BJ (cell line): ENCODE measurements at regions of chr12 and their contacts with region 1.

Region 1: DNA sequence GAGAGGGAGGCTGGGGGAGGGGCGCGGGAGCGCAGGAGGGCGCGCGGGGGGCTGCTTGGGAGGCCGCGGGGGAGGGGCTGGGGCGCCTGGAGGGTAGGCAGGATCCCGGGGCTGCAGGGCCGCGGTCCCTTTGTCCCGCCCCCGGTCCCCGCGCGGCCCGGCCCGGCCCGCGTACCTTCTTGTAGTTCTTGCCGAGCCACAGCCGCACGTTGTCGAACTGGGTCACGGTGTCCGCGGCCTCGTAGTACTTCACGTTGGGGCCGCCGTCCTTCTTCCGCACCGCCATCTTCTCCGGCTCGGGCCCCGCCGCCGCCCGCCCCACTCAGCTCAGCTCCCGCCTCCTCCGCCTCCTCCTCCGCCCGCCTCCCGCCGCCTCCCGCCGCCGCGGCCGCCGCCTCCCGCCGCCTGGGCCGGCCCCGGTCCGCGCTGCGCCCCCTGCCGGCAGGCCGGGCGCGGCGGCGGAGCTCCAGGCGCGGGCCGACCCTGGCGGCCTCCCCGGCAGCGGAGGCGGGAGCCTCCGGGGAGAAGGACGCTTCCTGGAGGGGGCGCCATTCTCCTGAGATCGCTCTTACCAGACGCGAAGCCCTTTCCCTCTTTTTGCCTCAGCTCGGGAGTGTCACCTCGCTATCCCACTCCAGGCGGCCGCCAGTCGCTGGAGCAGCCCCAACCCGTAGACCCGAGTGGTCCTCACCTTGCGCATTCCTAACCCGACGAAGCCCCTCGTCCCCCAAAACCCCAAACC is at the start of gene SMARCC2:
- DNase-seq: no peak
- H3K4me3 ChIP-seq: peak within 1 kb of the TSS; percentile 71
- H3K27me3 ChIP-seq: no peaks in the 10 kb centered on the region
- CTCF ChIP-seq: peak; percentile 67
- polyA plus RNA-seq, gene SMARCC2: 60.7 and 72.6 TPM in 2 replicates

Region 2: GRCh38 chr12:55732288-55732687 is 457.1 kb before region 1 on chr12:
- CTCF ChIA-PET with region 1: no interaction called
- POLR2A ChIA-PET with region 1: no interaction called
- DNase-seq: no peak
- H3K4me3 ChIP-seq: no peak overlapping the region
- H3K27me3 ChIP-seq: no peaks in the 10 kb centered on the region
- CTCF ChIP-seq: no peak

Region 3: GRCh38 chr12:56117778-56118687 is 71.3 kb before region 1 on chr12 and contains the start of gene ZC3H10:
- CTCF ChIA-PET with region 1: interaction called, 134 read pairs
- POLR2A ChIA-PET with region 1: interaction called, 6 read pairs
- DNase-seq: peak; percentile 98
- H3K4me3 ChIP-seq: peak within 1 kb of the TSS; percentile 72
- H3K27me3 ChIP-seq: no peaks in the 10 kb centered on the region
- CTCF ChIP-seq: peak; percentile 73
- polyA plus RNA-seq, gene ZC3H10: 1.4 and 1.6 TPM in 2 replicates

Region 4: DNA sequence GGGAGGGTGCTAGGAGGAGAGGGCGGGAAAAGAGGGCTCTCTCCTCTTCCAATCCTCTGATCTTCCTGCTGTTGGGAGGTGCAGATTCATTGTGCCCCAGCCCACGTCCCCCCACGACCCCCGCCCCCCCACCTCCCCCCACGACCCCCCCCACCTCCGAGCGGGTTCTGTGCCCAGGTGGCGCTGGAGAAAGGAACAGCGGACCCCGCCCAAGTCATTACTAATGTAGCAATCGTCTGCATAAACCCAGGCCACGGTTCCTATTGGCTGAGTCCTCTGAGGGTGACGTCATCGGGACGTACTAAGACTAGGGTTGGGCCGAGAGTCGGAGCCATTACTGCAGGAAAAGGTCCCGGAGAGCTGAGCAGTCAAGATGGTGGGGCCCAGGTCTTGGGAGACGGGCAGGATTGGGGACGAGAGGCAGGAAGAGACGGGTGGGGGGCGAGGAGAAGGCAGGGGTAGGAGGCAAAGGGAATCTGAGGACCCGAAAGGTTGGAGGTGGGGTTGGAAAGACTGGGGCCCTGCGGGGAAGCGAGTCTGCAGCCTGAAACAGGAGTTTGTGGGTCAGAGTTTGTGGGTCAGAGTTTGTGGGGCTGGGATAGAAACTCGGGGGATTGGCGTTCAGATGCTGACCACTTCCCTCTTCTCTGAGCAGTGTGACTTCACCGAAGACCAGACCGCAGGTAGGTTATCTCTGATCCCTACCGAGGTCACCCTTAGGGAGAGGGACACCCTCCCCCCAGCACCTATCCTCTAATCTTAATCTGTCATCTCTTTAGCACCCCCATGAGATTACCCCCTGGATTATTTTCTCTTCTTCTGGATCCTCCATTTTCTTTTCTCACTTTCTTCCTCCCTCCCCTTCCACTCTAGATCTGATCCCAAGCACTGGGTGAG is 31.1 kb before region 1 on chr12 and contains the start of gene MYL6:
- CTCF ChIA-PET with region 1: interaction called, 56 read pairs
- POLR2A ChIA-PET with region 1: interaction called, 4 read pairs
- DNase-seq: peak; percentile 85
- H3K4me3 ChIP-seq: peak within 1 kb of the TSS; percentile 64
- H3K27me3 ChIP-seq: no peaks in the 10 kb centered on the region
- CTCF ChIP-seq: no peak
- polyA plus RNA-seq, gene MYL6: 5,667 and 6,879 TPM in 2 replicates

Region 5: DNA sequence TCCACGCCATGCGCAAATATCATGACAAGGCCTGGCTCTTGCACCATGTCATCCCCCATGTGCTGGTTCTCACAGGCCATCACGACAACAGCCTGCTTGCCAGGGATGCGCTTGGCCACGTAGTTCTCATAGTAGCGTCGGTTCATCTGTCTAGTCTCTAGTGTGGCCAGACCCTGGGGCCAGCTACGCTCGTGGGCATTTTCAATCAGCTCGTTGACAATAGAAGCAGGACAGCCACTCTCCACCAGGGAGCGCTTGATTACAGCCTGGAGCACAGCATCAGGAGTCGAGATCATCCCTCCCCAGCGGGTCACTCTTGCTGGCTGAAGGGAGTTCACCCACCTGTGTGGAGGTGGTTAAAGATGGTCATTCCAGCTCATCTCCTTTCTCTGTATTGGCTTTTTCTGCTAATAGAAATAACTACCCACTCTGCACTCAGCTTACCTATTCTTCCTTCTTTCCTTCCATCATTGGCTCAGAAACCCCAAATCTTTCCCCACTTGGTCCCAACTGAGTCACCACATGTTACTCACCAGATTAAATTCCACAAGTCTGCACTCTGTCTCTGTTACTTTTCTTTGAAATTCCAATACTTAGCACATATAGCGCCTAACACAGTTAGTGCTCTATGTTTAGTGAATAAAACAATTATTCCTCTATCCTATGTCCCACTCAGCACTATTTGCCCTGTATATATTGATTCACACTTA is 17.3 kb after region 1 on chr12:
- CTCF ChIA-PET with region 1: interaction called, 20 read pairs
- POLR2A ChIA-PET with region 1: no interaction called
- DNase-seq: no peak
- H3K4me3 ChIP-seq: no peak overlapping the region
- H3K27me3 ChIP-seq: no peaks in the 10 kb centered on the region
- CTCF ChIP-seq: peak; percentile 64

Region 6: GRCh38 chr12:56258057-56258819 is 68.9 kb after region 1 on chr12 and contains the start of gene ANKRD52:
- CTCF ChIA-PET with region 1: interaction called, 24 read pairs
- POLR2A ChIA-PET with region 1: no interaction called
- DNase-seq: no peak
- H3K4me3 ChIP-seq: peak within 1 kb of the TSS; percentile 81
- H3K27me3 ChIP-seq: no peaks in the 10 kb centered on the region
- CTCF ChIP-seq: no peak
- polyA plus RNA-seq, gene ANKRD52: 21.0 and 26.8 TPM in 2 replicates